ENCODE measurements at regions of chr7 and their contacts with region 1.

Region 1: GRCh38 chr7:47273974-47274766 is 307.7 kb downstream of the TNS3 start:
- DNase-seq: no peak
- ATAC-seq: peak; percentile 12 to 57 (median 28)
- H3K4me3 ChIP-seq: no peak overlapping the region
- H3K27ac ChIP-seq: no peak overlapping the region
- H3K4me1 ChIP-seq: peaks cover 0 to 19% (median 7%) of the 10 kb centered on the region in 4 donors
- H3K27me3 ChIP-seq: no peaks in the 10 kb centered on the region
- CTCF ChIP-seq: no peak
- POLR2A ChIP-seq: no peak

Region 2: GRCh38 chr7:47827351-47827756 is 553.2 kb after region 1 on chr7:
- intact Hi-C with region 1: loop called in 1 of 2 experiments (anchors 10 kb)
- DNase-seq: no peak
- ATAC-seq: peak in 1 of 4 donors; percentile 43
- H3K4me3 ChIP-seq: no peak overlapping the region
- H3K27ac ChIP-seq: no peak overlapping the region
- H3K4me1 ChIP-seq: no peaks in the 10 kb centered on the region
- H3K27me3 ChIP-seq: no peaks in the 10 kb centered on the region
- CTCF ChIP-seq: no peak
- POLR2A ChIP-seq: no peak

Measured in right lobe of liver (tissue), 6 donors.